OCI-LY7 (cell line): ENCODE measurements at regions of chr1 and their contacts with region 1.

Region 1: GRCh38 chr1:83931658-83932253 is 67.2 kb downstream of the TTLL7 start:
- DNase-seq: peak; percentile 67
- H3K4me3 ChIP-seq: no peak overlapping the region
- H3K27ac ChIP-seq: no peak overlapping the region
- H3K4me1 ChIP-seq: no peaks in the 10 kb centered on the region
- CTCF ChIP-seq: peak; percentile 95

Region 2: GRCh38 chr1:84077476-84078107 is 145.8 kb after region 1 on chr1:
- CTCF ChIA-PET with region 1: interaction called, 14 read pairs
- POLR2A ChIA-PET with region 1: no interaction called
- intact Hi-C with region 1: no loop called
- DNase-seq: peak; percentile 89
- H3K4me3 ChIP-seq: peak overlapping the region; percentile 80
- H3K27ac ChIP-seq: peak overlapping the region; percentile 32
- H3K4me1 ChIP-seq: peaks cover 15% of the 10 kb centered on the region
- CTCF ChIP-seq: no peak

Region 3: DNA sequence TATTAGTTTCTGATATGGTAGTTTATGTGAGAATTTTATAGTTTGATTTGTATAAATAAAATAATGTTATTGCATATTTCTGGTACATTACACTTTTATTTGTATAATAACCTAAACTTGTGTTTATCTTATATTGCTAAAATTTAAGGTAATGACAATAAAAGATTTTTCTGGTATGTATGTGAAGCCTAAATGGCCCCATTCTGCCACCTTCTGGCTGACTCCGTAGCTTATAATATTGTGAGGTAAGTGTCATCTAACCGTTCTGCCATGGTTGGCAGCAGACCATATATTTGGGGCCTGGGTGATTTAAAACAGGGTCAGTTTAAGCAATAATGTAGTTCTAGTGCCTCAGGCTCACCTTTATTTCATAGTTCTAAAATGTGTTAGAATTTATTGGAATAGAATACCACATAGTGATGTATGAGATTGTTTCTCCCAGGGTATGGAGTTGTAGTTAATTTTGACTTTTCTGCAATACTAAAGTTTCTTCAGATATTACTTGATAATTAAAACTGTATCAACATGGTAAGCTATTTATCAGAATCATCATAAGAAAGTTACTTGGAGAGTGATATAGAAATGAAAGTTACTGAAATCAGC is 191.1 kb after region 1 on chr1:
- CTCF ChIA-PET with region 1: no interaction called
- POLR2A ChIA-PET with region 1: no interaction called
- intact Hi-C with region 1: loop called (anchors 1 kb)
- DNase-seq: peak; percentile 60
- H3K4me3 ChIP-seq: no peak overlapping the region
- H3K27ac ChIP-seq: no peak overlapping the region
- H3K4me1 ChIP-seq: no peaks in the 10 kb centered on the region
- CTCF ChIP-seq: peak; percentile 91

Region 4: GRCh38 chr1:84433258-84434080 is 501.7 kb after region 1 on chr1:
- CTCF ChIA-PET with region 1: no interaction called
- POLR2A ChIA-PET with region 1: no interaction called
- intact Hi-C with region 1: loop called (anchors 2 kb)
- DNase-seq: peak; percentile 76
- H3K4me3 ChIP-seq: peak overlapping the region; percentile 52
- H3K27ac ChIP-seq: no peak overlapping the region
- H3K4me1 ChIP-seq: peaks cover 26% of the 10 kb centered on the region
- CTCF ChIP-seq: peak; percentile 95

Region 5: DNA sequence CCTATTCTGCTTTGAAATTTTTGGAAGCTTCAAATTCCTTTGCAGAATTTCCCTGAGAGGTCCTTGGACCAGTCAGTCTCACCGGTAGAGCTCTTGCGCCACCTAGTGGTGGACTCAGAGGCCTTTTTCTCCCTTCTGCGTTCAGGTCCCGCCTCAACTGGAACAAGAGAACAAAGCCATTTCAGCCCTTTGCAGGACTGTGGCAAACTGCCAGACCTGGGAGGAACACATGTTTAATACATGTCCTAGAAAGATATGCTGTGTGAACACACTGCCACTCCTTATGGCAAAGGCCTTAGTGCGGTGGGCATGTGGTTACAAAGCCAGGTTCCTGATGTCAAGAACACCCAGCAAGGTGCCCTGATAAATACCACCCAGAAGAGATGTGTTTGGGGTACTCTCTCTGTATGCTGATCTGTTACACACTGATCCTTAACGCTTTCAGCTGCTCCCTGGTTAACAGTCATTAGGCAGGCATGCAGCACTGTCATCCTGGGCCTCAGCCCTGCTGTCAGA is 840.7 kb after region 1 on chr1:
- CTCF ChIA-PET with region 1: no interaction called
- POLR2A ChIA-PET with region 1: no interaction called
- intact Hi-C with region 1: loop called (anchors 5 kb)
- DNase-seq: peak; percentile 65
- H3K4me3 ChIP-seq: no peak overlapping the region
- H3K27ac ChIP-seq: no peak overlapping the region
- H3K4me1 ChIP-seq: no peaks in the 10 kb centered on the region
- CTCF ChIP-seq: peak; percentile 95